ENCODE measurements at regions of chr3 and their contacts with region 1.

Region 1: GRCh38 chr3:10224784-10225665 is 23.2 kb upstream of the TATDN2 start:
- DNase-seq: peak; percentile 79
- ATAC-seq: peak; percentile 41
- H3K4me3 Mint-ChIP-seq: peak overlapping the region; percentile 36
- H3K27ac Mint-ChIP-seq: peak overlapping the region; percentile 74
- H3K4me1 Mint-ChIP-seq: peaks cover 84% of the 10 kb centered on the region
- H3K27me3 Mint-ChIP-seq: no peaks in the 10 kb centered on the region

Region 2: DNA sequence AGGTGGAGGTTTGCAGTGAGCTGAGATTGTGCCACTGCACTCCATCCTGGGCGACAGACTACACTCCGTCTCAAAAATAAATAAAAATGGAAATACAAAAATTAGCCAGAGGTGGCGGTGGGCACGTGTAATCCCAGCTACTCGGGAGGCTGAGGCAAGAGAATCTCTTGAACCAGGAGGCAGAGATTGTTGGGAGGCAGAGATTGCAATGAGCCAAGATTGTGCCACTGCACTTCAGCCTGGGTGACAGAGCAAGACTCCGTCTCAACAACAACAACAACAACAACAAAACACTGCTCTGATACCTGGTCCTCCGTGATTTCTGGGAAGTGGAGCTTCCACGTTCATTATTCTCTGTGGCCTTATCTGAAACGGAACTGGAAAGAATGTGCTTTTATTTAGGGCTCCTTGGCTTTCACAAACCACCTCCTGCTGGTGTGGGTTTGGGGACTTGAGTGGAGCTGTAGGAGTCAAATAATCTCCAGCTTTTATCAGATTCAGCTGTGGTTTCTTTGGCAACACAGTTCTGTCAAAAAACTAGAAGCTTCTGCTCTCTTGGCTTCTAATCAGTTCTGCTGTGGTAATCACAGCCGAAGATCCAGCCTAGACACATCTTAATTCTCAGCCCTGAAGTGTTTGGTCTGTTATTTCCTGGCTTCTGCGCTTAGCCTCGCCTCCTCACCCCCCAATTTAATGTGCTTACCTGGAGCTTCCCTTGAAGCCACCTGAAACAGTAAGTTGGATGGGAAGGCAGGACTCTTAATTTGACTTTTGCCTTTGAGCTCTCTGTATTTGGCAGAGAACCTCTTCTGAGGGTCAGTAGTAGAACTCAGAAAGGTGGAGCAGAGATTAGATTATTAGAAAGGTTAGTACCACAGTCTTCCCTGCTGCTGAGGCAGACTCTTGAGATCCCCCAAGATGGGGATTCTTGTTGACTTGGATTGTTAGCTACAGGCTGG is 38.9 kb before region 1 on chr3:
- CTCF ChIA-PET with region 1: interaction called, 12 read pairs
- POLR2A ChIA-PET with region 1: no interaction called
- DNase-seq: peak; percentile 40
- ATAC-seq: peak; percentile 74
- H3K4me3 Mint-ChIP-seq: no peak overlapping the region
- H3K27ac Mint-ChIP-seq: peak overlapping the region; percentile 84
- H3K4me1 Mint-ChIP-seq: peaks cover 59% of the 10 kb centered on the region
- H3K27me3 Mint-ChIP-seq: no peaks in the 10 kb centered on the region

Region 3: GRCh38 chr3:10192953-10193691 is 31.9 kb before region 1 on chr3:
- CTCF ChIA-PET with region 1: interaction called, 14 read pairs
- POLR2A ChIA-PET with region 1: interaction called, 22 read pairs
- DNase-seq: peak; percentile 70
- ATAC-seq: no peak
- H3K4me3 Mint-ChIP-seq: peak overlapping the region; percentile 53
- H3K27ac Mint-ChIP-seq: peak overlapping the region; percentile 97
- H3K4me1 Mint-ChIP-seq: peaks cover 81% of the 10 kb centered on the region
- H3K27me3 Mint-ChIP-seq: no peaks in the 10 kb centered on the region

Region 4: GRCh38 chr3:10242182-10243065 is 17.4 kb after region 1 on chr3:
- CTCF ChIA-PET with region 1: interaction called, 11 read pairs
- POLR2A ChIA-PET with region 1: interaction called, 12 read pairs
- DNase-seq: peak; percentile 93
- ATAC-seq: peak; percentile 92
- H3K4me3 Mint-ChIP-seq: peak overlapping the region; percentile 64
- H3K27ac Mint-ChIP-seq: peak overlapping the region; percentile 95
- H3K4me1 Mint-ChIP-seq: peaks cover 49% of the 10 kb centered on the region
- H3K27me3 Mint-ChIP-seq: no peaks in the 10 kb centered on the region

Region 5: DNA sequence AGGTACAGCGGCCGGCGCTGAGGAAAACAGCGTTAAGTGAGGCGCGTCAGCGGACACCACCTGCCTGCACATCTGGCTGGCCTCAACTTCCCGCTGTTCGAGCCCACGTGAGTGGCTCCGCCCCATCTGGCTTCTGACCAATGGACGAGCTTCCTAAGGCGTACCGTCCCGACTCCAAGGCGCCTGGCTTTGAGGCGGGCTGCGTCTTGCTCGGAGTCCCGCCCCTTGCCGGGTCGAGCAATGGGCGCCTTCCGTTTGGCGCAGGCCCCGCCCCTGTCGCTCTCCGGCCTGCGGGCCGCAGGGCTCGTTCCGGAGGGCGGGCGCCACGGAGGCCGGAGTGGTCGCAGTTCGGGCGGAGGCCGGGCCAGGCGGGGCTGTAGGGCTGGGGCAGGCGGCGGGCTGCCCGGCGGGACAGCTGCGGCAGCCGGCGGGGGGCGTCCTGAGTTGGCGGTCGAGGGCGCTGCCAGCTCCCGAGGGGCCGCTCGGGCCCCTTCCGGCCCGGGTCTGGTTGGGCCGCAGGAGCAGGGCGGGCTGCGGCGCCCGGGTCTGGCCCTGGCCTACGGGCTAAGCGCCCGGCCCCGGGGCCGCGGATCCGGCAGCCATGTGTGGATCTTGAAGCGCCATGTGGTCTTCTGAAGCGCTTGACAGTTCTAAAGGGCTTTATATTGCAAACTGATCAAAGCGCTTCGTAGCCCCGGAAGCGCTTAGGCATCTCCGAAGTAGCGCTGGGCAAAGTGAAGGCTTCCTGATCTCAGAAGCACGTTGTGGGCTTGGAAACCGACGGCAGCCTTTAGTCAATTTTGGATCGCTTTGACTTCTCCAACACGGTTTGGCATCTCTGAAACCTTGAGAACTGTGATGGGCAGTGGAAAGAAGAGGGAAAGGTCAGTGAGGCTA is 23.4 kb after region 1 on chr3 and contains the start of gene TATDN2:
- CTCF ChIA-PET with region 1: interaction called, 11 read pairs
- POLR2A ChIA-PET with region 1: interaction called, 12 read pairs
- DNase-seq: peak; percentile 97
- ATAC-seq: peak; percentile 94
- H3K4me3 Mint-ChIP-seq: peak within 1 kb of the TSS; percentile 89
- H3K27ac Mint-ChIP-seq: peak within 1 kb of the TSS; percentile 95
- H3K4me1 Mint-ChIP-seq: peaks cover 41% of the 10 kb centered on the region
- H3K27me3 Mint-ChIP-seq: no peaks in the 10 kb centered on the region
- total RNA-seq, gene TATDN2: 57.0 to 61.6 TPM

Measured in activated CD8-positive, alpha-beta T cell treated with anti-CD3 and anti-CD28 coated beads, Interleukin-2, amount 10 ng/mL, durations not matched to agents 7 days and 5 days (primary cell).